GM10248 (cell line): ENCODE measurements at regions of chr17 and their contacts with region 1.

Region 1: DNA sequence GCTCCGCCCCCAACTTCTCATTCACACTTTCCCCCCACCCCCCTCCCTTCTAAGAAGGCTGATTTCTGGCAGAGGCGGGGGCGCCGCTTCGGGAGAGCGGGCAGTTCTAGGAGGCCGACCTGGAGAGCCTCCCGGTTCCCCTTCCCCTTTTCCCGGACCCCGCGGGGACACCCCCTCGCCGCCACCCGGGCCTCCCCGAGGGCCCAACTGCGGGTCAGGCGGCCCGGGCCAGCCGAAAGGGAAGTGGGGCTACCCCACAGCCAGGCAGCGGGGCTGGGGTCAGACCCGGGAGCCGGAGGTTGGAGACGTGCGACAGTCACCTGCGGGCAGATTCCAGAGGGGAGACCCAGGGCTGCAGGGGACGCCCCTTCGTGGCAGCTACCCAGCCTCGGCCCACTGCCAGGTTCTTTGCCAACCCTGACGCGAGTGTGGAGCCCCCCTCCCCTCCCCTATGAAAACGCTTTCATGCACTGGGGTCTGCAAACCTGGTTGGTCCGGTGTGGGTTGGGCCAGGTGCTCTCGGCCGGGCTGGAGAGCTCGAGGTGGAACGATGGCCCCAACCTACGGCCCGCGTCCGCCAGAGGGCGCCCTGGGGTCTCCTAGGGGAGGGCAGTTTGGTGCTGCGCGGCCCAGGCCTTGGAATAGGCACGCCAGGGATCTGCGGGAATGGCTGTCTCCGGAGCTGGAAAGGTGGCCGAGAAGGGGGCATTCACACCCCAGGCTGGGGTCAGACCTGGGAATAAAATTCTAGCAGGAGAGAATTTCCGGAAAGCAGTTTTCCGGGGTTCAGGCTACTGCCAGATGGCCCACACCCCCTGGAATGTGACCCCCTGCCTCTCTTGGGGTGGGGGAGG is 721 bp upstream of the SOCS3 start:
- DNase-seq: peak; percentile 91
- CTCF ChIP-seq: peak; percentile 90

Region 2: GRCh38 chr17:78324391-78325075 is 36.1 kb before region 1 on chr17:
- CTCF ChIA-PET with region 1: interaction called, 11 read pairs
- POLR2A ChIA-PET with region 1: no interaction called
- DNase-seq: peak; percentile 41
- CTCF ChIP-seq: no peak

Region 3: DNA sequence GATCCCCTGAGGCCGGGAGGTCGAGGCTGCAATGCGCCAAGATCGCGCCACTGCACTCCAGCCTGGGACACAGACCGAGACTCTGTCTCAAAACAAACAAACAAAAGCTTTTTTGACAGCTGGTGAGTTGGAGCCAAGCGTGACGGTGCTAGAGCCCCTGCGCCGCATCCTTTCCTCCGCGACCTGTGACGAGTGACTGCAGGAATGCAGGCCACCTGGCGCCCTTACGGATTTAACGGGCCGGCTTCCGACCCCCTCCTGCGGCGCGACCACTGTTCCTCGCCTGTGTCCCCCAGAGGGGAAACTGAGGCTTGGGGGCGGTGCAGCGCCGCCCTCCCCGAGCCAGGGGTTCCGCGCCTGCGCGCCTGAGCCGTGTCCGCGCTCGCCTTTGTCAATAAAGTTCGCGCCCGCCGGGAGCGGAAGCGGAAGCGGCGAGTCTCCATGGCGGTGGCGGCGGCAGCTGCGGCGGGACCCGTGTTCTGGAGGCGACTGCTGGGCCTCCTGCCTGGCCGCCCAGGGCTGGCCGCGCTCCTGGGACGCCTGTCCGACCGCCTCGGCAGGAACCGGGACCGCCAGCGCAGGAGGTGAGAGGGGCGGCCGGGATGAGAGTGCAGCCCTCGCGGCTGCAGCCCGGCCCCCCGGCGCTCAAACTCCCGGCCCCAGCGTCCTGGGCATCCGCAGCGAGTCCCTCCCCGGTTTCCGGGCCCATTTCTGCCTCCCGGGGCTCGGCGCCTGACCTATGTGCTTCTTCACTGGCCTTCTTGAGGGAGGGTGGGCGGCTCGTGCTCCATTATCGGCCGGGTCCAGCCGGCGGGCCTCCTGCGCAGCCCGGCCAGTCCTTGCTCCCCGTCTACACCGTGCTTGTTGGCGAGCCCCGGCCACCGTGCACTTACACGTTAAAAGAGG is 17.9 kb after region 1 on chr17 and contains the start of gene PGS1:
- CTCF ChIA-PET with region 1: interaction called, 47 read pairs
- POLR2A ChIA-PET with region 1: interaction called, 11 read pairs
- DNase-seq: peak; percentile 86
- CTCF ChIP-seq: no peak

Region 4: GRCh38 chr17:78401246-78401645 is 40.6 kb after region 1 on chr17:
- CTCF ChIA-PET with region 1: interaction called, 11 read pairs
- POLR2A ChIA-PET with region 1: interaction called, 3 read pairs
- DNase-seq: no peak
- CTCF ChIP-seq: no peak

Region 5: DNA sequence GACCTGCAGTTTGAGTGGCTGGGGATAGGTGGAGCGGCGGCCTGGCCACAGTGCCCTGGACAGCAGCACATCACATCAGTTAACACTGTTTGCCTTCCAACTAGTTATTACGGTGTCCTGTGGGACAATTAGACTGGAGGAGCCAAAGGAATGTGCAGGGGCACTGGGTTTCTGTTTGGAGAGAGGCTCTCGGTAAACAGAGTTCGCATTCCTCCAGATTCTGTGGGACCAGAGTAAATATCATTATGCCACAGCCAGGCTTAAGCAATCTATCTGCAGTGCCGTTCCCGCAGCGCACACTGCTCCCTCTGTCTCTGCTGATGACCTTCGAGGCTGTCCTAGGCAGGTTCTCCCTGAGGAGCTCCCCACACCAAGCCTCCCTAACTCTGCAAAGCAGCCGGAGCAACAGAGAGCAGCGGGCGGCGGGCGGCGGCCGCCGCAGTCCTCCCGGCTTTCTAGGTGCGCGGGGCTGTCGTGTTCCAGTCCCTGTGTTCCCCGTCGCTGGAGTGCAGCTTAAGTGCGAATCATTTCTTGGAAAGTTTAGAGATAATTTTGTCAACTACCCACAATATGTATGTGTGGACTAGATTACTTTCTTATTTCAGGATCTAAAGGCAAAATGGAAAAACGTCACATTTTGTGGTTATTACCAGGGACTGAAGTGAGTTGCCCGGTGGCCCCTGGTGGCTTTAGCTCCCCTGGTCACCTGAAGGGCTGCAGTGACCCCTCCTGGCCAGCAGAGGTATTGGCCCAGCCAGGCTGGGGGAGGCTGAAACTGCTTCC is 61.1 kb after region 1 on chr17:
- CTCF ChIA-PET with region 1: interaction called, 108 read pairs
- POLR2A ChIA-PET with region 1: no interaction called
- DNase-seq: peak; percentile 88
- CTCF ChIP-seq: peak; percentile 98